Activated CD4-positive, alpha-beta memory T cell treated with anti-CD3 and anti-CD28 coated beads, Interleukin-2, amount 10 ng/mL, durations not matched to agents 7 days and 5 days (primary cell): ENCODE measurements at regions of chr1 and their contacts with region 1.

Region 1: GRCh38 chr1:23634842-23635651 is 56.6 kb upstream of the RPL11 start:
- DNase-seq: peak; percentile 66
- H3K4me3 Mint-ChIP-seq: peak overlapping the region; percentile 53
- H3K27ac Mint-ChIP-seq: peak overlapping the region; percentile 22
- H3K4me1 Mint-ChIP-seq: peaks cover 25% of the 10 kb centered on the region
- H3K27me3 Mint-ChIP-seq: peaks cover 6% of the 10 kb centered on the region

Region 2: DNA sequence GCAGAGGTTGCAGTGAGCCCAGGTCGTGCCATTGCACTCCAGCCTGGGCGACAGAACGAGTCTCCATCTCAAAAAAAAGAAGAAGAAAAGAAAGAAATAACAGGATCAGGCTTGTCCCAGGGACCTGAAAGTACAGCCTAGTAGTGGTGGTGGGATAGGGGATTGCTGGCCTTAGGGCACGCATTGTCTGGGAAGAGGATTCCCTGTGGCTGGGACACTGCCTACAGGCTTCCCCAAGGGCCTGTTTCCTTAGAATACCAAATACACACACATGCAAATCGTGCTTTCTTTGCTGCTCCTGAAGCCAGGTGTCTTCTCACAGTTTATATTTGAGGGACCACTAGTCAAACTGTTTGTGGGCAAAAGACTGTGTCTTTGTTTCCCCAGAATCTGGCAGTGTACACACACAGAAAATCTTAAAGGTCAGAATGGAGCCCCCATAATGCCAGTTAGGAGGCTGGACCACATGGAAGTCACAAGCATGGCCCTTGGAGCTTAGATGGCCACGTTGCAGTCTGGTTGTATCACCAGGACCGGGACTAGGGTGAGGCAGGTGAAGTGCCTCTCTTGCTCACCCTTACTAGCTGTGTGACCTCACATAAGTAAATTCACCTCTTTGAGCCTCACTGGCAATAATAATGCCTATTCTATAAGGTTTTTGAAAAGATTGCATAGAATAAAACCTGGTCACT is 138.4 kb before region 1 on chr1:
- CTCF ChIA-PET with region 1: interaction called, 31 read pairs
- POLR2A ChIA-PET with region 1: no interaction called
- DNase-seq: no peak
- H3K4me3 Mint-ChIP-seq: no peak overlapping the region
- H3K27ac Mint-ChIP-seq: no peak overlapping the region
- H3K4me1 Mint-ChIP-seq: peaks cover 5% of the 10 kb centered on the region
- H3K27me3 Mint-ChIP-seq: peaks cover 11% of the 10 kb centered on the region

Region 3: DNA sequence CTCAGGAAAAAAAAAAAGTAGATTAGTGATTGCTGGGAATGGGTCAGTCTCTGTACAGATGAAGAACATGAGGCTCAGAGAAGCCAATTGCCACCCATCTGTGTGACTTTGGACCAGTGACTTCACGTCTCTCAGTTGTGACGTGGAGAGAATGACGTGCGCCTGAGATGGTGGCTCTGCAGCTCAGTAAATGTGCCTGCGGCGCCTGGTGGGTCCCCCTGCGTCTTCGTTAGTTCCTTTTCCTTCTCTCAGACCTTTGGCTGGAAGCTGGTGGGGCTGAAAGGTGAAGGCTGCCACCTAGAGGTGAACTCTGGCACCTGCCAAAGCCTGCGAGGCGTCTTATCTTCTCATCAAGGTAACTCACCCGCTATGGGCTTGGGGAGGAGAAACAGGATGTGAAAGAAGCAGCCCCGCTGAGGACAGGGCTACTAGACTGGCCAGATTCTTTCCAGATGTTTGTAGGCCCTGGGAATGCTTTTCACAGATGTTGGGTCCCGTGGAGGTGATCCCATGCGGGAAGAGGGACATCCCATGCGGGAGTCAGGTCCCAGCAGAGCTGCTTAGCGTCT is 95.3 kb before region 1 on chr1:
- CTCF ChIA-PET with region 1: interaction called, 545 read pairs
- POLR2A ChIA-PET with region 1: interaction called, 35 read pairs
- DNase-seq: peak; percentile 95
- H3K4me3 Mint-ChIP-seq: no peak overlapping the region
- H3K27ac Mint-ChIP-seq: peak overlapping the region; percentile 38
- H3K4me1 Mint-ChIP-seq: peaks cover 28% of the 10 kb centered on the region
- H3K27me3 Mint-ChIP-seq: peaks cover 6% of the 10 kb centered on the region

Region 4: DNA sequence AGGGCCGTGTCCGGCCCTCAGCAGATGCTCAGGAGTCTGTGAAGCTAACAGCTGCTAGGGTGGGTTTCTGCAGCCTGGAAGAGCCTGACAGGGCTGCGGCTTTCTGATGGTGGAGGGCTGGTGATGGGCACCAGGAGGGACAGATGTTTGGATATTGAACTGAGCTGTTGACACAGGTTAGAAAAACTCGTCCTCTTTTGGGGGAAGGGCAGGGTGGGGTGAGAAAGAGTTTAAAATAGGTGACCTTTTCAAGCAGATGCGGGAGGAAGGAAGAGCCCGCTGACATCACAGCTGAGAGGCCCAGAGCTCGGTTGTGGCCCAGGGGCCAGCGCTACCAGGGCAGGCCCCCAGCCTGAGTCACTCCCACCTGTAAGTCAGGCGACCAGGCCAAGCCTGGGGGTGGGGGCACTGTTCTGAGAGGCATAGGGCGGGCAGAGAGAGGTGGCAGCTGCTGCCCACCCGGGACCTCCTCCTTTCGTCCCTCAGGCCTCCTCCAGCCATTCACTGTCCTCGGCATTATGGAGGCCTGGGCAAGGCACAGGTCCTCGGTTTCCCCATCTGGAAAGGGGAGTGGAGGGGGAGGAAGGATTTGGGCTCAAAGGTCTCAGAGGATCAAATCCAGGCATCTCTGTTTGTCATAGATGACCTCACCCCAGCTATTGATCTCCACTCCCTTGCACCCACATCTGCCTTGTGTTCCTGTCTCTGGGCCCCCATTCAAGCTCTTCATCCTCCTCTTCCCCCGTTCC is 43.4 kb before region 1 on chr1:
- CTCF ChIA-PET with region 1: interaction called, 22 read pairs
- POLR2A ChIA-PET with region 1: no interaction called
- DNase-seq: peak; percentile 28
- H3K4me3 Mint-ChIP-seq: no peak overlapping the region
- H3K27ac Mint-ChIP-seq: peak overlapping the region; percentile 66
- H3K4me1 Mint-ChIP-seq: peaks cover 32% of the 10 kb centered on the region
- H3K27me3 Mint-ChIP-seq: peaks cover 2% of the 10 kb centered on the region

Region 5: DNA sequence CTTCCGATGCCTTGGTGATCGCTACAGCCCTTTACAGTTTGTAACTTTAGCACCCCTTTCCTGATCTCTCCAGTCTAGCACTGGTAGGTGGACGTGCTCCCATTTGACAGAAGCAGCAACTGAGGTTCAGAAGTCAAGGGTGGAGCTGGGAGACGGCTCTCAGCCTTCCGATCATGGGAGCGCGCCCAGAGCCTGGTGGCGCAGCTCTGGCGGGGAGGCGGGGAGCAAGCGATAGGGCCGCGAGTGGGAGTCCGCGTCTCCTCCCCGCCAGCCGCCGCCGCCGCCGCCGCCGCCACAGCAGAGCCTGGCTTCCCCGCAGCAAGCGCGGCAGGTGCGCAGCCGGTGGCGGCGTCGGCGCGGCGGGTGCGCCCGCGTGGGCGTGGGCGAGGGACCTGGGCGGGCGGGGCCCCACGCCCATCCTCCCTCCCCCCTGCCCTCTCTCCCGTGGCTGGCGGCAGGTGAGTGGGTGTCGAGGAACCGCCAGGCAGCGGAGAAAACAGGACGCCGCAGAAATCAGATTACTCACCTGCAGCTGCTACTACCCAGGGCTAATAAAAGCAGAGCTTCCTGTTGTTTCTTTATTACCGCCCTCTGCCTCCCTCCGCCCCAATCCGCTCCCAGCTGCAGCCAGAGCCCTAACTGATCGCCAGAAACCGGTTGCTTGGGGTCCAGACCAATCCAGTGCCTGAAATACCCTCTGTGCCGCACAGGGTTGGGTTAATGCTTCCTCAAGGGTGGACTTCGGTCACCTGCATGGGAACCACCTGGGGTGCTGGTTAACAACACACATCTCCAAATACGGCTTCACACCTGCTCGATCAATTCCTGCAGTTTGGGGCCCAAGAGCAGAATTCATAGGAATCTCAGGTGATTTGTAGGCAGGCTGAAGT is 15.5 kb before region 1 on chr1:
- CTCF ChIA-PET with region 1: interaction called, 43 read pairs
- POLR2A ChIA-PET with region 1: interaction called, 9 read pairs
- DNase-seq: peak; percentile 76
- H3K4me3 Mint-ChIP-seq: peak overlapping the region; percentile 67
- H3K27ac Mint-ChIP-seq: peak overlapping the region; percentile 70
- H3K4me1 Mint-ChIP-seq: peaks cover 53% of the 10 kb centered on the region
- H3K27me3 Mint-ChIP-seq: peaks cover 15% of the 10 kb centered on the region

Region 6: GRCh38 chr1:23691499-23692307 is 56.7 kb after region 1 on chr1 and contains the start of gene RPL11:
- CTCF ChIA-PET with region 1: interaction called, 5 read pairs
- POLR2A ChIA-PET with region 1: interaction called, 12 read pairs
- DNase-seq: peak; percentile 89
- H3K4me3 Mint-ChIP-seq: peak within 1 kb of the TSS; percentile 94
- H3K27ac Mint-ChIP-seq: peak within 1 kb of the TSS; percentile 86
- H3K4me1 Mint-ChIP-seq: peaks cover 49% of the 10 kb centered on the region
- H3K27me3 Mint-ChIP-seq: no peaks in the 10 kb centered on the region
- total RNA-seq, gene RPL11: 1,074 to 1,084 TPM

Region 7: DNA sequence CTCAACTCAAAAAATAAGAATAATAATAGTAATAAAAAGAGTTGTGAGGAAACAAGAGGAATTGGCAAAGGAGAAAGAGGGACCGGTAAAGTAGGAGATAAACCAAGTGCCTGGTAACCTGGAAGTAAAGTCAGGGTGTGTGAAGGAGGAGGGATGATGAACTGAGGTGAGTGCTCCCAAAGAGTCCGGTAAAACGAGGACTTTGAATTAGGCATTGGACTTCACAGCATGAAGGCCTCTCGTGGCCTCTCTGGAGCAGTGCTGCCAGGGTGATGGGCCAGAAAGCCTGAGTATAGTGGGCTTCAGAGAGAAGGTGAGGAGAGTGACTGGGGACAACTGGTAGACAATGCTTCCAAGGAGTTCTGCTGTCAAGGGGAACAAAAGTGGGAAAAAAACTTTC is 74.2 kb after region 1 on chr1:
- CTCF ChIA-PET with region 1: no interaction called
- POLR2A ChIA-PET with region 1: no interaction called
- DNase-seq: no peak
- H3K4me3 Mint-ChIP-seq: no peak overlapping the region
- H3K27ac Mint-ChIP-seq: no peak overlapping the region
- H3K4me1 Mint-ChIP-seq: no peaks in the 10 kb centered on the region
- H3K27me3 Mint-ChIP-seq: no peaks in the 10 kb centered on the region

Region 8: GRCh38 chr1:23719162-23719820 is 84.2 kb after region 1 on chr1:
- CTCF ChIA-PET with region 1: no interaction called
- POLR2A ChIA-PET with region 1: no interaction called
- DNase-seq: no peak
- H3K4me3 Mint-ChIP-seq: no peak overlapping the region
- H3K27ac Mint-ChIP-seq: no peak overlapping the region
- H3K4me1 Mint-ChIP-seq: peaks cover 18% of the 10 kb centered on the region
- H3K27me3 Mint-ChIP-seq: no peaks in the 10 kb centered on the region

Region 9: DNA sequence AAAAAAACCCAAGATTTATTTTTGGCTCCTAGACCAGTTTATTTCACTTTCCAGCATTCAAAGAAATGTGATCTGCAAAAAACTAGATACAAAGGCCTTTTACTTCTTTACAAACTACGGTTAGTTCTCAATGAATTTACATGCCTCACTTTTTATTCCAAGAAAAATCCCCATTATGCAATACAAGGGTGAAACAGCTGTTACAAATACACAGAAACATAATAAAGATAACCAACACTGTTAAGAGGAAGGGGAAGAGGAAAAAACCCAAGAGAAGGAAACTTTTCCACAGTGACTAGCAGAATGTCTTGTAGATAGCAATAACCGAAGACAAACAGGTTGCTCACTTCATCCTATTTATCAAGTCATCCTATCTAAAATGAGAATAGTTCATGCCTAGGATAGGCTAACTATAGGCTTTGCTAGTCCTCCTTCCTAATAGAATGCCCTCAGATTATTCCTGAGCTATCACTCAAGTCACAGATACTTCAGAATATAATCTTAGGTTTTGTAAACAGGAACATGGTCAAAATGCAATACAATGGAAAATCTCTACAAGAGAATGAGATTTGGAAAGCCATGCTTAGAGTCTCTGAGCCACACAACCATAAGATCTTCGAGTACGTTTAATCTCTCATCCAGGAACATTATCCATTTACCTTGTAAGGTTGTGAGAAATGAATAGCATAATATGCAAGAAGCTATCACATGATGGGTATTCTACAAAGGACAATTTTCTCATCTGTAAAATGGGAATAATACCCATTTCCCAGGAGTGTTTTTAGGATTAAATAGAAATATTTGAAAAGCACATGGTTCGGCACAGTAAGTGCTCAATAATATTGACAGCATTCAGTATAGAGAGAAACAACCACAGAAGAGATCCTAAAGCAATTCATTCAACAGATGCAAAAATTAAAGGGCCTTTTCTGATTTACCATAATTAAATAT is 330.0 kb after region 1 on chr1:
- CTCF ChIA-PET with region 1: no interaction called
- POLR2A ChIA-PET with region 1: no interaction called
- DNase-seq: no peak
- H3K4me3 Mint-ChIP-seq: peak overlapping the region; percentile 5
- H3K27ac Mint-ChIP-seq: peak overlapping the region; percentile 78
- H3K4me1 Mint-ChIP-seq: peaks cover 74% of the 10 kb centered on the region
- H3K27me3 Mint-ChIP-seq: no peaks in the 10 kb centered on the region